HepG2 (cell line): ENCODE measurements at regions of chr6 and their contacts with region 1.

Region 1: DNA sequence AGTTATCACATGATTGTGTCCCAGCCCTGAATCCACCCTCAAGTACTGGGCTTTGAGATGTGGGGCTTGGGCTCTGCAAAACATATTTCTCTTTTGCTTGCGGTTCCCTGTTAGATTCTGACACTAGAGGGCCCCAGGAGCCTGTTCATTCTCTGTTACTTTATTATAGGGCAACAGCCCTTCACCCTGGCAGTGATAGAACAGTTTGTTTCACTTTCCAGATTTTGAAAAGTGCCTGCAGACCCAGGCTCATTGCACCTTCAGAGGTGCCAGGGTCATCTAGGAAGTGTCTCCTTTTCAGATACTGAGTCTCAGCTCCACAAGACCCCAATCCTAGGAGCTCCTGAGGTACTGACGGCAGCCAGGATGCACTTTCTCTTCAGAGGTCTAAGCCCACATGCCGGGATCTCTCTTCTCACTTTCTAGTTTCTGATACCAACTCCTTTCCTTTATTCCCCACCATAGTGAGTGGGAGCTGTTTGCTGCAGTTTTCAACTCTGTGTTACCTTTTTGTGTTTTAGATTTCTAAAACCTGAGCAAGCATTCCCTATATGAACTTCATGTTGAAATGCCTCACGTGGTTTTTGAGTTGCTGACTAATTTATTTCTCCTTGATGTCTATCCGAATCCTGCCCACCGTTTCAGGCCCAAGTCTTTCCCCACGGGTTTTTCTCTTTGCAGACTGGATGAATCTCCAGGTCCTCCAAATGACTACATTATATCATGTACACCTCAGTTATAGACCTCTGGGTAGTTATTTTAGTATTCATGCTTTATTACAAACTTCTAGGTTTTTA is 10.9 kb downstream of the ABT1 start:
- DNase-seq: peak; percentile 72
- ATAC-seq: peak; percentile 95
- H3K4me3 ChIP-seq: peak overlapping the region; percentile 45 to 59 (median 57)
- H3K27ac ChIP-seq: no peak overlapping the region
- H3K4me1 ChIP-seq: peaks cover 5% of the 10 kb centered on the region; the same call in 1 of the 2 replicates
- H3K27me3 ChIP-seq: peaks cover 0 to 6% of the 10 kb centered on the region in 2 experiments; a peak in 1 of 5 replicates
- CTCF ChIP-seq: peak; percentile 91
- EP300 ChIP-seq: no peak
- POLR2A ChIP-seq: no peak
- RAD21 ChIP-seq: peak; percentile 83

Region 2: DNA sequence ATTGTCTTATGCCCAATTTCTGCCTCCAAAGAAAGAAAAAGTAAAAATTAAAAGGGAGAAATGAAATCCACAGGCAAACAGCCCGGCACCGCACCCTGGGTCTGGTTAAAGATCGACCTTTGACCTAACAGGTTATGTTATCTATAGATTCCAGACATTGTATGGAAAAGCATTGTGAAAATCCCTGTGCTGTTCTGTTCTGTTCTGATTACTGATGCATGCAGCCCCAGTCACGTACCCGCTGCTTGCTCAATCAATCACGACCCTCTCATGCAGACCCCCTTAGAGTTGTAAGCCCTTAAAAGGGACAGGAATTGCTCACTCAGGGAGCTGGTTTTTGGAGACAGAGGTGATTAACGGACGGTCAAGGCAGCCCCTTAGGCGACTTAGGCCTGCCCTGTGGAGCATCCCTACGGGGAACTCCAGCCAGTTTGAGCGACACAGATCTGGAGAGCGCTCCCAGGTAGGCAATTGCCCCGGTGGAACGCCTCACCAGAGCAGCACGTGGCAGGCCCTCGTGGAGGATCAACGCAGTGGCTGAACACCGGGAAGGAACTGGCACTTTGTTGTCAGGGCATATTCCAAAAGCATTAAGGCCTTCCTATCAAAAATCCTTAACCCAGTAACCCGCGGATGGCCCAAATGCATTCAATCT is 532.4 kb before region 1 on chr6:
- CTCF ChIA-PET with region 1: no interaction called
- POLR2A ChIA-PET with region 1: no interaction called
- in situ Hi-C with region 1: no loop called
- intact Hi-C with region 1: no loop called
- DNase-seq: peak; percentile 28
- ATAC-seq: peak; percentile 60
- H3K4me3 ChIP-seq: no peak overlapping the region; a peak in 1 of 6 replicates
- H3K27ac ChIP-seq: no peak overlapping the region
- H3K4me1 ChIP-seq: peaks cover 51% of the 10 kb centered on the region
- H3K27me3 ChIP-seq: no peaks in the 10 kb centered on the region
- CTCF ChIP-seq: no peak
- EP300 ChIP-seq: no peak
- POLR2A ChIP-seq: no peak
- RAD21 ChIP-seq: no peak

Region 3: DNA sequence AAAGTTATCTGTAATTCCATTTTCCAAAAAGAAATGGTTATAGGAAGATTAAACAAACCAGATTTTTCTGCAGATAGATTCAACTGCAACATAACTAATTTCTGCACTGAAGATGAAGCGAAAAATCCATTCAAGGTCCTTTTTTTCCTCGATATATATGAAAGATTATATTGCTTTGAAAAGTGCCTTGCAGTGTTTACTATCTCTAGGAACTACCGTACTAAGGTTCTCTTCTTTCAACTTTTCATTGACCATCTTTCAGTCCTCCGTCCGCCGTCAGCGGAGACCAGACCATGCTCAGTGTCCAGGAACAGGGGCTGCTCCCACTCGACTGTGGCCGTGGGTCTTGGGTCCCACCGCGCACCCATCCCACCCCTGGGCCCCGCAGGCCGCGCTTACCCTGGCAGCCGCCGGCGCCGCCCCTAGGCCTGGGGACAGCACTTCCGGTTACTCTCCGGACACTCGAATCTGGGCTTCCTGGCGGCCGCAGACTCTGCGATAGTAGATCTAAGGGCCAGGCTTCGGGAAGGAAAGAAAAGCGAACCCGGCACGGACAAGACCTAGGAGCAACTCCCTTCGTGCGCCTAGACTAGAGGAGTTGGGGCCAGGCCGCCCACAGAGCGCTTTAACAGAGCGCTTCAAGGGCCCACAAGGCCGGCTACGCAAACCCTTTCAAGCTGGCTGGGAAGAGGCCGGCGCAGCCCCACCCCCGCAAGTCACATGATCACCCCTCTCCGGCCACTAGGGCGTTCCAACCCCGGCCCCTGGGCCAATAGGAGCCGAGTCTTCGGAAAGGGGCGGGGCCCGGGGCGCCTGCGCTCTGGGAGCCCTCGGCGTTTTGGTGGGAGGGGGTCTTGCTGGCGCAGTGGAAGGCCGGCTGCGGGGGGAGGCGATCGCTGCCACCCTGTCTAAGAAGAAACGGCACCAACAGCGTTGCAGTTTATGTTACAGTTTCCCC is 51.7 kb after region 1 on chr6 and contains the start of gene ZNF322:
- CTCF ChIA-PET with region 1: no interaction called
- POLR2A ChIA-PET with region 1: no interaction called
- in situ Hi-C with region 1: no loop called
- intact Hi-C with region 1: loop called (anchors 2 kb)
- DNase-seq: peak; percentile 94
- ATAC-seq: peak; percentile 99
- H3K4me3 ChIP-seq: peak within 1 kb of the TSS; percentile 83 to 85 (median 83)
- H3K27ac ChIP-seq: peak within 1 kb of the TSS; percentile 71
- H3K4me1 ChIP-seq: peaks cover 38% of the 10 kb centered on the region
- H3K27me3 ChIP-seq: peaks cover 0 to 19% of the 10 kb centered on the region in 2 experiments; a peak in 1 of 5 replicates
- CTCF ChIP-seq: peak; percentile 26; the same call in 1 of the 2 replicates
- EP300 ChIP-seq: no peak
- POLR2A ChIP-seq: peak; percentile 62 to 71
- RAD21 ChIP-seq: peak; percentile 7; the same call in 1 of the 2 replicates
- total RNA-seq, gene ZNF322: 22.8 and 35.0 TPM in 2 replicates

Region 4: DNA sequence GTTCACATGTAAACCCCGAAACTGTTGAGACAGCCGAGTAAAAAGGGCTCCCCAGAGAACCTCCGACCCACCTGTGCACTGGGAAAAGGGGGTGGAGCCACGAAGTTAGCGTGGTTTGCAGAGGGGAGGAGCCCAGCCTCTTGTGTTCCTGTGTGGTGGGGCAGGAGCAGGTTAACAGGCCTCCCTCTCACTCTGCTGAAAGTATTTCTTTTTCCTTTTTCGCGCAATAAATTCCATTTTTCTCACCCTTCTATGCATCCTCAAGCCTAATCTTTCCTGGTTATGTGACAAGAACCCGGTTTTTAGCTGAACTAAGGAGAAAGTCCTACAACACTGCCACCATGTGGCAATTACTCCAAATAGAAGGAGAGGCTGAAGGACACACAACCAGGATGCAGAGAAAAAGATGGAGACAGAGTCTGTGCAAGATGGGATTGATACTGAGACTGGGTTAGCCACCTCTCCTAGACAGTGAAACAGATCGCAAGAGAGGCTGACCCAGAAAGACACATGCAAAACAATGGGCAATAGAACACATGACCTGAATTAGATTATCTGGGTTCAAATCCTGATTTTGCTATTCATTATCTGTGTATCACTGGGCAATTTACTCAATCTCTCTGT is 471.2 kb after region 1 on chr6:
- CTCF ChIA-PET with region 1: interaction called, 66 read pairs
- POLR2A ChIA-PET with region 1: no interaction called
- in situ Hi-C with region 1: loop called (anchors 5 kb)
- intact Hi-C with region 1: loop called (anchors 1 kb)
- DNase-seq: peak; percentile 75
- ATAC-seq: peak; percentile 96
- H3K4me3 ChIP-seq: peak overlapping the region; percentile 18 to 52 (median 19); a peak in 4 of 6 replicates
- H3K27ac ChIP-seq: no peak overlapping the region
- H3K4me1 ChIP-seq: peaks cover 28% of the 10 kb centered on the region
- H3K27me3 ChIP-seq: no peaks in the 10 kb centered on the region
- CTCF ChIP-seq: peak; percentile 92
- EP300 ChIP-seq: no peak
- POLR2A ChIP-seq: no peak
- RAD21 ChIP-seq: peak; percentile 85